Aorta (tissue), 5 donors: ENCODE measurements at regions of chr1 and their contacts with region 1.

Region 1: DNA sequence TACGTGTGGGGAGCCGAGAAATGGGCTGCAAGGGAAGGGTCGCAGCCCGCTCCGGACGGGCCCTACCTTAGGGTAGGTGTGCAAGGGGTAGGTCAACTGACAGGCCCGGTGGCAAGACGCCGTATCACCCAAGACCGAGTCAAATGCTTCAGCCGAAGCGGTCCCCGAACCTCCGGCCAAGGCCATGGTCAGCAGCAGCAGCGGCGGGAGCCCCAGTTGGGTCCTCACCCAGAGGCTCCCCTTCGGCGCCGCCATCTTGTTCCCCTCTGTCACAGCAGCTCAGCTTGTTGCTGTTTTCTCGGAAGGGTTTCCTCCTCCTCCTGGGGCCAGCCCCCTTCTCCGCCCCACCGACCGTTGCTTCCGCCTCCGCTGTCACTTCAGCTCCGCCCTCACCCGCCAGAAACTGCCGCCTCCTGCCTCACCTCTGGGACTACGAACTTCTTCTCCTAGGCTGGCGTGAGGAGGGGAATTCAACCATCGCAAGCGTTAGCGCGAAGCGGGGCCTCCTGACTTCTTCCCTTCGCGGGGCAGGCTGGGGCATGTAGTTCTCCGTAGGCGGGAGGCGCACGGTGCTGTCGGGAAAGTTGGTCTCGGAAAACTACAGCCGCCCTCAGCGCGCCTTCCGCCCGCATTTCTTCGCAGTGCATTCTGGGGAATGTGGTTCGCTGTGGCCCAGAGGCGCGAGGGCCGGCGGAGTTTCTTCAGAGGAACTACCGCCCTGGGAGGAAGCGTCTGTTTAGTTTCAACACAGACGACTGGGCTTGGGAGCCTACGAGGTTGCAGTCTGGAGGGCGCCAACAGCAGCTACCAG is at the starts of genes TCEANC2 and TMEM59:
- DNase-seq: peak; percentile 99
- ATAC-seq: peak; percentile 98
- H3K4me3 ChIP-seq: peak within 1 kb of the TSS; percentile 79 to 82
- H3K27ac ChIP-seq: peak within 1 kb of the TSS; percentile 3 to 99
- H3K4me1 ChIP-seq: peaks cover 0 to 1% of the 10 kb centered on the region in 2 donors
- H3K27me3 ChIP-seq: no peaks in the 10 kb centered on the region
- total RNA-seq, gene TCEANC2: 3.5 to 7.0 TPM
- total RNA-seq, gene TMEM59: 294 to 356 TPM

Region 2: DNA sequence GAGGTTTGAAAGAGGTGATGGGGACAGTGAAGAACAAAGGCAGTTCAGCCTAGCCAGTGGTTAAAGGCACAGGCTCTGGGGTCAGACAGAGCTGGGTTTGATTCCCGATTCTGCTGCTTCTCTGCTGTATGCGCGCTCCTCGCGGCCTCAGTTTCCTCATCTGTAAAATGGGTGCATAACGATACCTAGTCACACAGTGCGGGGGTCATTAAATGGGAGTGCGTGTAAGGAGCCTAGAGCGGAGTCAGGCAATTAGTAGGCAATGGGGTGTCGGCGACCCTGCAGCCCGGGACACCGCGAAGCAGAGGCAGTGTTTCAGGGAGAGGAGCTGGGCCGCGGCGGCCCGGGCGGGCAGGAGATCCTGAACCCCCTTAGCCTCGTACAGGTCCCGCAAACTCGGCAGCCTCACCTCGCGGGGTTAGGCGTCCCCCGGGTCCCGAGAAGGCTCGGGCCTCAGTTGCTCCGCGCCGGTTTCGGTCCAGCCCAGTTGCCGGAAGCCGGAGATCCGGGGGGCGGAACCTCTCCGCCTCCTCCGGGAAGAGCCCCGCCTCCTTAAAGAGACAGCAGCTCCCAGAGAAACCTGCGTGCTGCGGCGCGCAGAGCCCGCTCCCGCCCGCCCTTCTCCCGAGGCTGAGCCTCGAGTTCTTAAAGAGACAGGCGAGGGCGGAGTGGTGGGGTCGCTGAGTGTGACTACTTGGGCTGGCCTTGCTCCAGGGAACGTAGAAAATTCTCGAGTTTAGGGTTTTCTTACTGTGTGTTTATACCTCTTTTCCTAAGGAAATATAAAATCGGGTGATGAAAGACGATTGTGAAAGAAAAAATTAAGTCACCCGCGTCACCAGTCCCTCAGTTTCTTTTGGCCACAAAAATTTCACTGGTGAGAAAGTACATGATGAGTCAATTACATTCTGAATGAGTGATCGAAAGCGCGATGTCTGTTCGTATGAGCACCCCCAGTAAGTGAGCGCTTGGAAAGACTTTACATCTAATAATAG is 163.5 kb before region 1 on chr1 and contains the start of gene YIPF1:
- intact Hi-C with region 1: loop called in 1 of 2 experiments (anchors 10 kb)
- DNase-seq: peak; percentile 95 to 97
- ATAC-seq: peak; percentile 98
- H3K4me3 ChIP-seq: peak within 1 kb of the TSS; percentile 83 to 99
- H3K27ac ChIP-seq: peak within 1 kb of the TSS; percentile 11 to 51
- H3K4me1 ChIP-seq: no peaks in the 10 kb centered on the region
- H3K27me3 ChIP-seq: no peaks in the 10 kb centered on the region
- total RNA-seq, gene YIPF1: 17.7 to 23.4 TPM